Transverse colon (tissue), 4 donors: ENCODE measurements at regions of chr12 and their contacts with region 1.

Region 1: GRCh38 chr12:122895705-122896636 is at the start of gene VPS37B:
- DNase-seq: peak; percentile 89
- H3K4me3 ChIP-seq: peak within 1 kb of the TSS; percentile 78 to 96 (median 88)
- H3K27ac ChIP-seq: peak within 1 kb of the TSS; percentile 93 to 98 (median 95)
- H3K4me1 ChIP-seq: peaks cover 16 to 70% (median 46%) of the 10 kb centered on the region in 4 donors
- H3K27me3 ChIP-seq: no peaks in the 10 kb centered on the region
- CTCF ChIP-seq: peak in 1 of 5 experiments; percentile 59
- EP300 ChIP-seq: peak; percentile 34
- POLR2A ChIP-seq: peak; percentile 97
- total RNA-seq, gene VPS37B: 46.6 to 126 (median 104) TPM

Region 2: DNA sequence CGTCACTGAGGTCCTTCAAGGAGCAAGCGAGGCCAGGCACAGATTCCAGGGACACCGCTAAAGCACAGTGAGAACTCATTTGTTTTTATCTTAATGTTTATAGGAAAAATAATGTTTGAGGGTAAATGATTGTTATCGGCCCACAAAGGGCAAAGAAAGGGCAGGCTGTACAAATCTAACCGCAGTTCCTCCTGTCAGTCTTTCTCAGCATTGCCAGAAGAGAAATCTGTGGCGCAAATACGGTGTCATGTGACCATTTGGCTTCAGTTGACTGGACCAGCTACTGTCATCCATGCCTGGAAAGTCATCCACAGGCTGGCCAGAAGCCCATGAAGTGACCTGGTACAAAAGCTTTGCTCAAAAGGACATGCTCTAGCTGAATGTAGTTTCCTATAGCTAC is 236.5 kb before region 1 on chr12:
- in situ Hi-C with region 1: no loop called
- intact Hi-C with region 1: loop called (anchors 5 kb)
- DNase-seq: no peak
- H3K4me3 ChIP-seq: no peak overlapping the region
- H3K27ac ChIP-seq: no peak overlapping the region
- H3K4me1 ChIP-seq: no peaks in the 10 kb centered on the region
- H3K27me3 ChIP-seq: no peaks in the 10 kb centered on the region
- CTCF ChIP-seq: no peak
- EP300 ChIP-seq: no peak
- POLR2A ChIP-seq: no peak

Region 3: DNA sequence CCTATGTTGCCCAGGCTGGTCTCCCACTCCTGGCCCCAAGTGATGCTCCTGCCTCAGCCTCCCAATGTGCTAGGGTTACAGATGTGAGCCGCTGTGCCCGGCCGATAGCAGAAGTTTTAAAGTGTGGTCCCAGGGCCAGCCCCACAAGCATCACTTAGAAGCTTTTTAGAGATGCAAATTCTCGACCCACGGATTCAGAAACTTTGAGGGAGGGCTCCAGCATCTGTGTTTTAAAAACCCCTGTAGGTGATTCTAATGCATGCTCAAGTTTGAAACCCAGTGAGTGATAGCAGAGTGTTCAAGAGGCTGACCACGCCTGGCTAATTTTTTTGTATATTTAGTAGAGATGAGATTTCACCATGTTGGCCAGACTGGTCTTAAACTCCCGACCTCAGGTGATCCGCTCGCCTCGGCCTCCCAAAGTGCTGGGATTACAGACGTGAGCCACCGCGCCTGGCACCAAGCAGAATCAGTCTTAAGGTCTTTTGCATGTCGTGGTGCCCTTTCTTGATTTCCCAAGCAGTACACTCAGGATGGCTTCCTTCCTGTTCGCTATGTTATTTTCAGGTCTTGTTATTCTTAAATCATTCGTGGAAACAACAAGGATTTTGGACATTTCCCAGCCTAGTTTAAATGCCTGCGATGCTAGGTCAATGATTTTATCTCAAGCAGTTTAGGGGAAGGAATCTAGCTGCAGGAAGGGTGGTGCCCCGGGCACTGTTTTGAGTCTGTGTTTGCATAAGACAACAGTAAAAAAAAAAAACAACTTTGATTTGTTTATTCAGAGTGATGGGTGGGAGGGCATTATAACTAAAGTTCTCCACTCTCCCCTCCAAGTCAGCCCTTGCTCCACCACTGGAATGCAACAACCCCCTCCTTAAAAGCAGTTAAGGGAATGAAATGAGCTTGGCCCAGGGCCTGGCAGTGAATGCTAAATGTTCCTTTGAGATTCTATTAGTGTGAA is 549.7 kb after region 1 on chr12:
- in situ Hi-C with region 1: no loop called
- intact Hi-C with region 1: no loop called
- DNase-seq: no peak
- H3K4me3 ChIP-seq: no peak overlapping the region
- H3K27ac ChIP-seq: peak overlapping the region; percentile 22 to 55 (median 47)
- H3K4me1 ChIP-seq: peaks cover 0 to 15% (median 12%) of the 10 kb centered on the region in 4 donors
- H3K27me3 ChIP-seq: no peaks in the 10 kb centered on the region
- CTCF ChIP-seq: no peak
- EP300 ChIP-seq: no peak
- POLR2A ChIP-seq: no peak